ENCODE measurements at regions of chr15 and their contacts with region 1.

Region 1: DNA sequence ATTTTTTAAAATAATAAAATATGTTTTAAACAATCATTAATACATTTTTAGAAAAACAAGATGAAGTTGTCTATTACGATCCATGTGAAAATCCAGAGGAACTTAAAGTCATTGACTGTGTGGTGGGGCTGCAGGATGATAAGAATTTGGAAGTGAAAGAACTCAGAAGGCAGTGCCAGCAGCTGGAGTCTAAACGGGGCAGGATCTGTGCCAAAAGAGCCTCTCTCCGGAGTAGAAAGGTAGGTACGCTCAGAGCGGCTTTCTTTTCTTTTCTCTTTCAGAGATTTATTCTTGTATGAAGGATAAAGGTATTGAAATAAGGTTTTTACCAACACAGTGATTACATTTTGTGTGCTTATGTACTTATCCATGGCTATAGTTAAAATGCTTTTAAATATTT is 13.6 kb downstream of the WHAMM start:
- DNase-seq: no peak
- H3K4me3 Mint-ChIP-seq: no peak overlapping the region
- H3K27ac Mint-ChIP-seq: no peak overlapping the region
- H3K4me1 Mint-ChIP-seq: peaks cover 3% of the 10 kb centered on the region
- H3K27me3 Mint-ChIP-seq: no peaks in the 10 kb centered on the region

Region 2: DNA sequence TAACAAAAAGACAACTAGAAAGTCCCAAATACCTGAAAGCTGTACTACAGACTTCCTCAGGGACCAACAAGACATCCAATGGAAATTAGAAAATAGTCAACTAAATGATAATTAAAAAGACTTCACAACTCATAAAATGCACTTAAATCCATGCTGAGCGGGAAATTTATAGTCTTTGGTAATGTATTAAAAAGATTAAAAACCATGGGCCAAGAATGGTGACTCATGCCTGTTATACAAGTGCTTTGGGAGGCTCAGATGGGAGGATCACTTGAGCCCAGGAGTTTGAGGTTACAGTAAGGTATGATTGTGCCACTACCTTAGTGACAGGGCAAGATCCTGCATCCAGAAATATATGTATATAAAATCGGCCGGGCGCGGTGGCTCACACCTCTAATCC is 220.9 kb before region 1 on chr15:
- intact Hi-C with region 1: no loop called
- DNase-seq: no peak
- H3K4me3 Mint-ChIP-seq: no peak overlapping the region
- H3K27ac Mint-ChIP-seq: no peak overlapping the region
- H3K4me1 Mint-ChIP-seq: no peaks in the 10 kb centered on the region
- H3K27me3 Mint-ChIP-seq: peaks cover 13% of the 10 kb centered on the region

Region 3: DNA sequence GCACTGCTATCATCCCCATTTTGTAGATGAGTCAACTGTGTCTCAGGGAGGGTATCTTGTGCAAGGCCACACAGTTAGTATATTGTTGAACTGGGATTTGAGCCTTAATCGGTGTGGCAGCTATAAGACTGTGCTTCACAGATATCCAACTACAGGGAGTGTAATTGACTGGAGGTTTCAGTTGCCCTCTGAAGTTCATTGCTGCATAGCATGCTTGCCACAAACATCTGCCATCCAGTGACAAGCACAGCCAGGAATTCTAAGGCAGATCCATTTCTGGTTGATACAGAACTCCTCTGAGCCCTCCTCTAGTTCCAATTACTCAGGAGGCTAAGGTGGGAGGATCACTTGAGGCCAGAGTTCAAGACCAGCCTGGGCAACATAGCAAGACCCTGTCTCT is 33.6 kb before region 1 on chr15:
- intact Hi-C with region 1: loop called (anchors 2 kb)
- DNase-seq: no peak
- H3K4me3 Mint-ChIP-seq: no peak overlapping the region
- H3K27ac Mint-ChIP-seq: no peak overlapping the region
- H3K4me1 Mint-ChIP-seq: no peaks in the 10 kb centered on the region
- H3K27me3 Mint-ChIP-seq: peaks cover 21% of the 10 kb centered on the region